Common myeloid progenitor, CD34-positive (primary cell): ENCODE measurements at regions of chr20 and their contacts with region 1.

Region 1: GRCh38 chr20:44747166-44748004 is 1.7 kb downstream of the KCNK15 start:
- DNase-seq: peak; percentile 74 to 86 (median 79)
- H3K4me3 ChIP-seq: no peak overlapping the region
- H3K27ac ChIP-seq: no peak overlapping the region
- H3K4me1 ChIP-seq: peaks cover 0 to 21% (median 15%) of the 10 kb centered on the region in 4 experiments
- H3K27me3 ChIP-seq: peaks cover 7 to 53% (median 22%) of the 10 kb centered on the region in 5 experiments

Region 2: DNA sequence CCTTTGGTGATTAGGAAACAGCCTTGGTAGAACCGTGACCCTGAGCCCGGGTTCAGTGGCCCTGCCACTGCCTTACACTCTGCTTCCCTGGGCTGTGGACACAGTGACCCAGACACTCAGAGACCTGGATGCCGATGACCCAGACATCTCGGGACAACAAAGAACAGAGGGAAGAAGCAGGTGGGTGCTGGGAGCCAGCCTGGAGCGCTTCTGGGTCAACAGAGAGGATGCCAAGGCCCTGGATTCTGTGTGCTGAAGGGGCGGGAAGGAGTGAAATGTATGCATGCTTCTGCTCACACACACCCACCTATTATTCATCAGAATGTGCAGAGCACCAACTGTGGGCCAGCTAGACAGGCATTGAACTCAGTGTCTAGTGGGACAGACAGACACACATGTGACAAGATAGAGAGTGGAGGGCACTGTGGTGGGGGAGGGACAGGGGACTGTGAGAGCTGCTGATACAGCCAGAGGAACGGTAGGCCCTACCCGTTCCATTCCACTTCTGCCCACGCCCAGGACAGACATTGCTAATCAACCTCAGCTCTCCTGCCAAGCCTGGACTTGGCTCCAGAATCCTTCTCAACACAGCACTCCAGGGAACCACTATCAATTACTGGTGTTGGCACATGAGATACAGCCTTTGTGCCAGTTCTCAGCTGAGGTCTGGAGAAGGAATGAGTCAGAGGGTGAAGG is 18.4 kb after region 1 on chr20:
- CTCF ChIA-PET with region 1: interaction called, 22 read pairs
- POLR2A ChIA-PET with region 1: no interaction called
- DNase-seq: no peak
- H3K4me3 ChIP-seq: no peak overlapping the region
- H3K27ac ChIP-seq: no peak overlapping the region
- H3K4me1 ChIP-seq: no peaks in the 10 kb centered on the region
- H3K27me3 ChIP-seq: peaks cover 0 to 33% (median 7%) of the 10 kb centered on the region in 5 experiments

Region 3: DNA sequence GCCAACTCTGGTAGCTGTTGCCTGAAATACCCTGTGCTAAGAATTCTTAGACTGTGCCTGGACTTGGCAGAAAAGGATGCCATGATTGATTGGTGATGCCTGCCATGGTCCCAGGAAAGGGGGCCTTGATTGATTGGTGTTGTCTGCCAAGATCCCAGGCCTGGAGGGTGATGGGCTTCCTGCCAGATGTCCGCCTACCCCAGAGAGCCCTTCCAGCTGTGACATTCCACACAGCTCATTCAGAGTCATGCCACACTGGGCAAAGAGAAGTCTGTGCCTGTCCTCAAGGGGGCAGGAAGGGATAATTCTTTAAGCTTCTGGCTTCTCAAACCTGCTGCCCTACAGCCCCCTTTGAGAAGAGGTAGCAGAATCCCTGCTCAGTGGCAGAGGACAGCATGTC is 38.4 kb after region 1 on chr20:
- CTCF ChIA-PET with region 1: no interaction called
- POLR2A ChIA-PET with region 1: no interaction called
- DNase-seq: no peak
- H3K4me3 ChIP-seq: no peak overlapping the region
- H3K27ac ChIP-seq: no peak overlapping the region
- H3K4me1 ChIP-seq: no peaks in the 10 kb centered on the region
- H3K27me3 ChIP-seq: peaks cover 0 to 24% (median 7%) of the 10 kb centered on the region in 5 experiments

Region 4: DNA sequence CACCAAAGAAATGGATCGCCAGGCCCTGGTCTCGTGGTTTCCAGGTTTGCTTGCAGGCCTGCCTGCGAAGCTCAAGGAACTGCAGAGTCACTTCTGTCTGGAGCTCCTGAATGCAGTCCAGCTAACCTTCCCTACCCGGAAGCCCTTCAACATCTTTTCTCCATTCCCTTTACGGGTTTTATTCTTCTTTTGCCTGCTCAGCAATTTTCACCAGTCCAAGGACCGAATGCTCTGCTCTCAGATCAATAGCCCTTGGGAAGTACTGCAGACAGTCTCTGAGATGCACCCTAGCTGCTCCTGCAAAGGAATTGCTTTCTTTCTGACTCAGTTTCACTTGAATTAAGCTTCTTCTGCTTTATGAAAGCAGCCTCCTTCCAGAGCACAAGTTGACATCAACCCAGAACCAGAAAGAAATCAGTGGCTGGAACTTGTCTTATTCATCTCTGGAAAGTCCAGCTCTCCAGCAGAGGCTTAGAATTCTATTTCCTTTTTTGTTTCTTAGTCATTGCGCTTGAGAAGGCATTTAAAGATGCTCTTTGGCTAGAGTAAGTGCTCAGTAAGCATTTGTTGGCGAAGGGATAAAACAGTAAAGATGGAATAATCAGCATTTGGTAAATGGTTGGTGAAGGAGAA is 119.4 kb after region 1 on chr20:
- CTCF ChIA-PET with region 1: interaction called, 21 read pairs
- POLR2A ChIA-PET with region 1: no interaction called
- DNase-seq: peak in 2 of 3 donors; percentile 34 to 48
- H3K4me3 ChIP-seq: peak overlapping the region in 1 of 7 experiments; percentile 6
- H3K27ac ChIP-seq: no peak overlapping the region
- H3K4me1 ChIP-seq: peaks cover 0 to 10% (median 4%) of the 10 kb centered on the region in 4 experiments
- H3K27me3 ChIP-seq: peaks cover 0 to 3% (median 0%) of the 10 kb centered on the region in 5 experiments

Region 5: DNA sequence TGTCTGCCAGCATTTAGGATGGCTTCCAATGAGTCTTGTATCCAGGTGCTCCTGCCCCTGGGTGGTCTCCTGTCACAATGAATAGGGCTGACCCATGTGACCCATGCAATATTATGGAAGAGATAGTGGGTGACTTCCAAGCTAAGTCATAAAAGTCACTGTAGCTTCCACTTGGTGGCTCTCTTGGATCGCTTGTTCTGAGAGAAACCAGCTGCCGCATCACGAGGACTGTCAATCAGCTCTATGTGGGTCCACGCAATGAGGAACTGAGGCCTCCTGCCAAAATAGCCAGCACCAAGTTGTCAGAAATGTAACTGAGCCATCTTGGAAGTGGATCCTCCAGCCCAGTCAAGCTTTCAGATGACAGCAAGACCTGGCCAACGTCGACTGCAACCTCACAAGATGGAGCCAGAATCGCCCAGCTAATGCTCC is 575.6 kb after region 1 on chr20:
- CTCF ChIA-PET with region 1: no interaction called
- POLR2A ChIA-PET with region 1: no interaction called
- DNase-seq: peak; percentile 77 to 90 (median 89)
- H3K4me3 ChIP-seq: no peak overlapping the region
- H3K27ac ChIP-seq: no peak overlapping the region
- H3K4me1 ChIP-seq: peaks cover 2 to 29% (median 16%) of the 10 kb centered on the region in 4 experiments
- H3K27me3 ChIP-seq: peaks cover 0 to 2% (median 0%) of the 10 kb centered on the region in 5 experiments